Activated B cell treated with CpG ODN at 0.5 μM for 24 hours (primary cell): ENCODE measurements at regions of chr5 and their contacts with region 1.

Region 1: DNA sequence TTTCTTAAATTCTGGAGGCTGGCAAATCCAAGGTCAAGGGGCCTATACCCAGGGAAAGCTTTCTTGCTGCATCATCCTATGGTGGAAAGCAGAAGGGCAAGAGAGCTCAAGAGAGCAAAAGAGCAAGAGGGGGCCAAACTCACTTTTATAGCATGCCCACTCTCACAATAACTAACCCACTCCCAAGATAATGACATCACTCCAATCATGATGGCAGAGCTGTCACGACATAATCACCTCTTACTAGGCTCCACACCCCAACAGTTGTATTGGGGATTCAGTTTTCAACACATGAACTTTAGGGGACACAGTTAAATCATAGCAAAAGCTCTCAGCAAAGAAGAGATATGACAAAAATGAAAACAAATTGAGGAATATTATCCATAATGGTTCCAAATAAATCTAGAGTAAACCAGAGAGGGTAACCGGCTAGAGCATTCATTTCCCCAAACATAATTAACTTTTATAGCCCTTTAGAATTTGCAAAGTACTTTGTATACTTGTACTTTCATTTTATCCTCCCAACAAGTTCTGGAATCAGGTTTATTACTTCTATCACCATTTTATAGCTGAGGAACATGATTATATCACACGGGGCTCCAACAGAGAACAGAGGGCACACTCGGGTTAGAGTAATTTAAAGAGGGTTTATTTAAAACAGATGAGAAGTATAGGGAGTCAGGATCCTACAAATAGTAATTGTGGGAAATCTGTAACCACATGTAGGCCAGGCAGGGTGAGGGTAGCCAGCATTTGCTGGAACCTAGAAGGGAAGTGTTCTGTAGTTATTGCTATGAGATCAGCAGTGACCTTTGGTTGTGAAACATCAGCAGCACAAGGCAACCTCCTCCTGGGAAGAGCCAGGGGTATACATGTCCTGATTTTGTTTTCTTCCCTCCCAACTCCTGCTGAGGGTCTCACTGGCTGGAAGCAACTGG is 7.2 kb upstream of the TARS1 start:
- DNase-seq: no peak
- ATAC-seq: no peak
- H3K4me3 Mint-ChIP-seq: no peak overlapping the region
- H3K27ac Mint-ChIP-seq: no peak overlapping the region
- H3K4me1 Mint-ChIP-seq: peaks cover 5% of the 10 kb centered on the region
- H3K27me3 Mint-ChIP-seq: peaks cover 4% of the 10 kb centered on the region
- CTCF ChIP-seq: no peak

Region 2: GRCh38 chr5:33457126-33457525 is 23.6 kb after region 1 on chr5:
- CTCF ChIA-PET with region 1: no interaction called
- POLR2A ChIA-PET with region 1: no interaction called
- intact Hi-C with region 1: no loop called
- DNase-seq: no peak
- ATAC-seq: no peak
- H3K4me3 Mint-ChIP-seq: no peak overlapping the region
- H3K27ac Mint-ChIP-seq: no peak overlapping the region
- H3K4me1 Mint-ChIP-seq: no peaks in the 10 kb centered on the region
- H3K27me3 Mint-ChIP-seq: no peaks in the 10 kb centered on the region
- CTCF ChIP-seq: no peak

Region 3: GRCh38 chr5:33969572-33970452 is 536.2 kb after region 1 on chr5:
- CTCF ChIA-PET with region 1: interaction called, 14 read pairs
- POLR2A ChIA-PET with region 1: no interaction called
- intact Hi-C with region 1: loop called (anchors 1 kb)
- DNase-seq: no peak
- ATAC-seq: peak; percentile 42
- H3K4me3 Mint-ChIP-seq: no peak overlapping the region
- H3K27ac Mint-ChIP-seq: no peak overlapping the region
- H3K4me1 Mint-ChIP-seq: no peaks in the 10 kb centered on the region
- H3K27me3 Mint-ChIP-seq: peaks cover 5% of the 10 kb centered on the region
- CTCF ChIP-seq: no peak